Activated CD4-positive, alpha-beta memory T cell treated with anti-CD3 and anti-CD28 coated beads for 36 hours (primary cell): ENCODE measurements at regions of chr16 and their contacts with region 1.

Region 1: GRCh38 chr16:27235055-27235937 is 32.0 kb downstream of the KDM8 start:
- DNase-seq: peak; percentile 92
- H3K4me3 Mint-ChIP-seq: peak overlapping the region; percentile 59
- H3K27ac Mint-ChIP-seq: peak overlapping the region; percentile 99
- H3K4me1 Mint-ChIP-seq: peaks cover 94% of the 10 kb centered on the region
- H3K27me3 Mint-ChIP-seq: no peaks in the 10 kb centered on the region

Region 2: GRCh38 chr16:27169511-27170071 is 65.7 kb before region 1 on chr16:
- CTCF ChIA-PET with region 1: interaction called, 13 read pairs
- POLR2A ChIA-PET with region 1: interaction called, 4 read pairs
- intact Hi-C with region 1: no loop called
- DNase-seq: peak; percentile 90
- H3K4me3 Mint-ChIP-seq: peak overlapping the region; percentile 9
- H3K27ac Mint-ChIP-seq: peak overlapping the region; percentile 79
- H3K4me1 Mint-ChIP-seq: peaks cover 57% of the 10 kb centered on the region
- H3K27me3 Mint-ChIP-seq: no peaks in the 10 kb centered on the region

Region 3: DNA sequence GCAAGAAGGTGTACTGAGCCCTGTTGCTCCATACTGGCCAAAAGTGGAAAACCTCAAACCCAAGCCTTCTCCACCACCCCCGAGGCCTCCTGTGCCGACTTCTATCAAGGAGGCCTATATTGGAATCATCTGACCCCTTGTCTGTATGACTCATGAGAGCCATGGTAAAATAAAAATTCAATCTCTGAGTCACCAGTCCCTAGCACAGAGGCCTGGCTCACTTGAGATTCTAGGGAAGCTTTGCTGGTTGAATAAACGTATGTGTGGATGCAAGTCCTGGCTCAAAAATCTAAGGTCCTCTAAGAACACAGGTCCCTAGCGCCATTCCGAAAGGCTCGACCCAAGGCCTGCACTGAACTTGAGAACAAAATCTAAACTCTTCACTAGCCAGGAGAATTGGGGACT is 18.2 kb after region 1 on chr16:
- CTCF ChIA-PET with region 1: interaction called, 29 read pairs
- POLR2A ChIA-PET with region 1: interaction called, 28 read pairs
- intact Hi-C with region 1: loop called (anchors 1 kb)
- DNase-seq: no peak
- H3K4me3 Mint-ChIP-seq: peak overlapping the region; percentile 47
- H3K27ac Mint-ChIP-seq: peak overlapping the region; percentile 90
- H3K4me1 Mint-ChIP-seq: peaks cover 86% of the 10 kb centered on the region
- H3K27me3 Mint-ChIP-seq: no peaks in the 10 kb centered on the region

Region 4: DNA sequence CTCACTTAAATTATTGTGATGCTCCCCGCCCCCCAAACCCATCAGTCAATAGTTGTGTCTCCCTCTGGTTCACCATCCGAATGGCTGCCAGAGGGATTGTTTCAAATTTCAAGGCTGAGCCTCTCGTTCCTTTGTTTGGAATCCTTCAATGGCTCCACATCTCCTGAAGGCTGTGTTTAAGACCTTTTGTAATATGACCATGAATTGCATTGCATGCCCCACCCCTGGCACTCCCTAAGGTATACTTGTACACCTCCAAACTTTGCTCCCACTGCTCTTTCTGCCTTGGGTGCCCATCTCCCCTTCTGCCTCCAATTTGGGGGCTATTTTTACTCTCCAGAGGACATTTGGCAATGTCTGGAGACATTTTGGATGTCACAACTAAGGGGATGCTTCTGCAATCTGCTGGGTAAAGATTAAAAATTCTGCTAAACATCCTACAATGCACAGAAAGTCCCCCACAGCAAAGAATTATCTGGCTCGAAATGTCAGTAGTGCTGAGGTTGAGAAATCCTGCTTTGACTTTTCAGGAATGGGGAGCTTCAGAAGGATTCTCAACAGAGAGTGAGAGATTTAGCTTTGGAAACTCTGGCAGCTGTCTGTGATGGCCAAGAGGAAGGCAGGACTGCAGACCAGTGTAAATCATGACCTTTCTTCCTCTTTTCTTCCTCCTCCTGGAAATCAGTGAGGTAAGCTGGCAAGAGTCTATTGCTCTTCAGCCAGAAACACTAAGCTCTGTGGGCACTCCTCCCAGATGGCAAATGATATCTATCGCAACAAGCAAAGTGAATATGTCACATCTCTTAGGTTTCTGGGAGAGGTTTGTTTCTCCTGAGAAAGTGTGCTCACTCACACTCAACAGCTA is 69.8 kb after region 1 on chr16:
- CTCF ChIA-PET with region 1: interaction called, 18 read pairs
- POLR2A ChIA-PET with region 1: no interaction called
- intact Hi-C with region 1: no loop called
- DNase-seq: no peak
- H3K4me3 Mint-ChIP-seq: no peak overlapping the region
- H3K27ac Mint-ChIP-seq: no peak overlapping the region
- H3K4me1 Mint-ChIP-seq: peaks cover 5% of the 10 kb centered on the region
- H3K27me3 Mint-ChIP-seq: peaks cover 2% of the 10 kb centered on the region

Region 5: DNA sequence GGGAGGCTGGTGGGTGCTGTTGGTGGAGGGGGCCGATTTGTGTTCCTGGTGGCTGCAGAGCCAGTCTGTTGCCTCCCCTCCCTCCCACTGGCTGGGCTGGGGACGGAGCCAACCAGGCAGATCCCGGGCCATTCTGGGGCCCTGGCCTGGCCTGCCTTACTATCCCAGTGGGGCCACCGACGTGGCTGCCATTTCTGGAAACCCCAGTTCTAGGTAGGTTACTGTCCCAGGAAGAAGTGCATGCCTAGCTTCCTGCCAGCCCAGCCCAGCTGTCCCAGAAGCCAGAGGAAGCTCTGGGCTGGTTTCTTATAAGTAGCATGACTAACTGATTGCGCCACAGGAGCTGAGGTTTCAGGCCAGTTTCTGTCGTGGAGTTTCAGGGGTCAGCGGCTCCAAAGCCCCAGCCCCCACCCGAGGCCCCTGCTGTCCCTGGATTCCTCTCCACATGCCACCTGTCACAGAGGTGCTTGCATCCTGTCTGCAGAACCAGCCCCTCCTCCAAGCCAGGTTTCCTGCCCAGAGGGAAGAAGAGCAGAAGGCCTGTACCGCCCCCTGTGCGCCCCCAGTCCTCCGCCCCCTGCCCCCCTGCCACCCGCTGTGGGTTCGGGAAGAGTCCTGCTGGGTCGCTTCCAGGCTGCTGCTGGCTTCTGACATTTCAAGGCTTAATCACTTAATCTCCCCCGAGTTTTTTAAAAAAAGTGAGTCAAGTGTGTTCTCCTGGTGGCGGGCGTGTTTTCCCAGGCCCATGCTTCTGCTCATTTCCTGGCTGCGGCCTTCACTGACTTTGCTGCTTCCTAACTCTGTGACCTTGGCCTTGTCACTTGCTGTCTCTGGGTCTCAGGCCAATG is 91.7 kb after region 1 on chr16:
- CTCF ChIA-PET with region 1: interaction called, 113 read pairs
- POLR2A ChIA-PET with region 1: interaction called, 4 read pairs
- intact Hi-C with region 1: no loop called
- DNase-seq: peak; percentile 65
- H3K4me3 Mint-ChIP-seq: peak overlapping the region; percentile 51
- H3K27ac Mint-ChIP-seq: peak overlapping the region; percentile 89
- H3K4me1 Mint-ChIP-seq: peaks cover 84% of the 10 kb centered on the region
- H3K27me3 Mint-ChIP-seq: no peaks in the 10 kb centered on the region

Region 6: GRCh38 chr16:27374804-27375425 is 139.6 kb after region 1 on chr16:
- CTCF ChIA-PET with region 1: interaction called, 108 read pairs
- POLR2A ChIA-PET with region 1: interaction called, 4 read pairs
- intact Hi-C with region 1: no loop called
- DNase-seq: peak; percentile 83
- H3K4me3 Mint-ChIP-seq: no peak overlapping the region
- H3K27ac Mint-ChIP-seq: no peak overlapping the region
- H3K4me1 Mint-ChIP-seq: peaks cover 36% of the 10 kb centered on the region
- H3K27me3 Mint-ChIP-seq: no peaks in the 10 kb centered on the region

Region 7: GRCh38 chr16:27461483-27462171 is 226.3 kb after region 1 on chr16:
- CTCF ChIA-PET with region 1: interaction called, 8 read pairs
- POLR2A ChIA-PET with region 1: no interaction called
- intact Hi-C with region 1: loop called (anchors 1 kb)
- DNase-seq: no peak
- H3K4me3 Mint-ChIP-seq: no peak overlapping the region
- H3K27ac Mint-ChIP-seq: no peak overlapping the region
- H3K4me1 Mint-ChIP-seq: peaks cover 41% of the 10 kb centered on the region
- H3K27me3 Mint-ChIP-seq: no peaks in the 10 kb centered on the region